CD4-positive, alpha-beta memory T cell (primary cell): ENCODE measurements at regions of chr13 and their contacts with region 1.

Region 1: GRCh38 chr13:26698392-26699196 is 62.0 kb downstream of the GPR12 start:
- DNase-seq: peak; percentile 66 to 74 (median 72)
- H3K4me3 ChIP-seq: no peak overlapping the region
- H3K4me3 Mint-ChIP-seq: peak overlapping the region in 2 of 8 donors; percentile 12 to 43
- H3K27ac ChIP-seq: no peak overlapping the region
- H3K27ac Mint-ChIP-seq: peak overlapping the region in 1 of 7 donors; percentile 11
- H3K4me1 ChIP-seq: peaks cover 4% of the 10 kb centered on the region
- H3K4me1 Mint-ChIP-seq: peaks cover 0 to 3% (median under 1%) of the 10 kb centered on the region in 4 donors
- H3K27me3 ChIP-seq: no peaks in the 10 kb centered on the region
- H3K27me3 Mint-ChIP-seq: peaks cover 3 to 6% of the 10 kb centered on the region in 2 donors

Region 2: GRCh38 chr13:26502826-26503225 is 195.8 kb before region 1 on chr13:
- CTCF ChIA-PET with region 1: interaction called, 8 read pairs
- POLR2A ChIA-PET with region 1: no interaction called
- intact Hi-C with region 1: loop called (anchors 5 kb)
- DNase-seq: no peak
- H3K4me3 ChIP-seq: no peak overlapping the region
- H3K4me3 Mint-ChIP-seq: peak overlapping the region in 2 of 8 donors; percentile 37 to 60
- H3K27ac ChIP-seq: no peak overlapping the region
- H3K27ac Mint-ChIP-seq: no peak overlapping the region
- H3K4me1 ChIP-seq: no peaks in the 10 kb centered on the region
- H3K4me1 Mint-ChIP-seq: peaks cover 0 to 5% (median 2%) of the 10 kb centered on the region in 4 donors
- H3K27me3 ChIP-seq: no peaks in the 10 kb centered on the region
- H3K27me3 Mint-ChIP-seq: peaks cover 3 to 6% of the 10 kb centered on the region in 2 donors

Region 3: DNA sequence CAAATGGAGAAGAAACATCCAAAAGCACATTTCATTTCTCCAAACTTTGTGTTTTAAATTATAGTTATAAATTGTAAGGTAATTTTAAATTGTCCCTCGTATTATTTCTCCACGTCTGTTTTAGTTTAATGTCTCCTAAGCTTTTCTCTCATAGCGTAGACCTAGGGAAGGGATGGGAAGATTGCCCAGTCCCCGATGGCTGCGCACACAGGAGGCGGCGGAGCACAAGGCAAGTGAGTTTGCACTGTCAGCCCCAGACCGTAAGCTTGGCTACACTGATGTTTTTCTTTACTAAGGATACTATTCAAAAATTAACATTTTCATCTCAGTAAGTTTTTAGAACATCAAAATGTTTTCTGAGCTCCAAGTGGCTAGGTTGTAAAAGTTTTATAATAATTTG is 10.3 kb before region 1 on chr13:
- CTCF ChIA-PET with region 1: interaction called, 23 read pairs
- POLR2A ChIA-PET with region 1: no interaction called
- intact Hi-C with region 1: no loop called
- DNase-seq: no peak
- H3K4me3 ChIP-seq: no peak overlapping the region
- H3K4me3 Mint-ChIP-seq: no peak overlapping the region
- H3K27ac ChIP-seq: no peak overlapping the region
- H3K27ac Mint-ChIP-seq: no peak overlapping the region
- H3K4me1 ChIP-seq: no peaks in the 10 kb centered on the region
- H3K4me1 Mint-ChIP-seq: no peaks in the 10 kb centered on the region
- H3K27me3 ChIP-seq: no peaks in the 10 kb centered on the region
- H3K27me3 Mint-ChIP-seq: peaks cover 7 to 14% of the 10 kb centered on the region in 2 donors

Region 4: DNA sequence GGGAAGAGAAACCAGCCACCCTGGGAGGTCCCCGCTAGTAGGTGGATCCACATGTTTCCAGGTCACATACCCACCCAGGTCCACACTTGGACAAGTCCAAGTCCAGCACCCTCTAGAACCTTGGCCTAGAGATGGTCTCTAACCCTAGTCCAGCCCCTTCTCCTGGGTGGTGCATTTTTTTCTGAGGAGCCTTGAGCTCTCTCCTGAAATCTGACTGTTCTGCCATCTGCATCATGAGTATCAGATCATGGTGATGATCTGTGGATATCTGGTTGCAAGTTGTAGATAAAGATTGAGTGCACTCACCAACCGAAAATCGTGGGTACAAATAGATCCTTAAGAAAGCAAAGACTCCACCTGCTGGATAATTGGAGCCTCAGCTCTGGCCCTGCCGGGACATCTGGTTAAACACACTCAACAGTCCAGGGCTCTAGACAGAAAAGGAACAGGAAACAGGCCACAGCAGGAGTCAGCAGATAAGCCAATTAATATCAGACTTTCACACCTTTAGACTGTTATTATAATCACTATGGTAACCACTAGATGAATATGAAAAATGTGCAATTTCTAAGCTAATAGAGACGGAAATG is 20.9 kb after region 1 on chr13:
- CTCF ChIA-PET with region 1: interaction called, 10 read pairs
- POLR2A ChIA-PET with region 1: no interaction called
- intact Hi-C with region 1: no loop called
- DNase-seq: no peak
- H3K4me3 ChIP-seq: no peak overlapping the region
- H3K4me3 Mint-ChIP-seq: no peak overlapping the region
- H3K27ac ChIP-seq: no peak overlapping the region
- H3K27ac Mint-ChIP-seq: peak overlapping the region in 1 of 7 donors; percentile 70
- H3K4me1 ChIP-seq: peaks cover 19% of the 10 kb centered on the region
- H3K4me1 Mint-ChIP-seq: peaks cover 16 to 30% (median 23%) of the 10 kb centered on the region in 4 donors
- H3K27me3 ChIP-seq: no peaks in the 10 kb centered on the region
- H3K27me3 Mint-ChIP-seq: no peaks in the 10 kb centered on the region